Activated CD4-positive, alpha-beta T cell treated with anti-CD3 and anti-CD28 coated beads for 36 hours (primary cell): ENCODE measurements at regions of chr18 and their contacts with region 1.

Region 1: GRCh38 chr18:43571078-43571689 is 293.9 kb upstream of the SYT4 start:
- DNase-seq: peak; percentile 29
- ATAC-seq: no peak
- H3K4me3 Mint-ChIP-seq: no peak overlapping the region
- H3K27ac Mint-ChIP-seq: no peak overlapping the region
- H3K4me1 Mint-ChIP-seq: no peaks in the 10 kb centered on the region
- H3K27me3 Mint-ChIP-seq: no peaks in the 10 kb centered on the region

Region 2: GRCh38 chr18:43596105-43596712 is 25.0 kb after region 1 on chr18:
- CTCF ChIA-PET with region 1: interaction called, 10 read pairs
- POLR2A ChIA-PET with region 1: no interaction called
- intact Hi-C with region 1: no loop called
- DNase-seq: no peak
- ATAC-seq: peak; percentile 49
- H3K4me3 Mint-ChIP-seq: no peak overlapping the region
- H3K27ac Mint-ChIP-seq: no peak overlapping the region
- H3K4me1 Mint-ChIP-seq: no peaks in the 10 kb centered on the region
- H3K27me3 Mint-ChIP-seq: peaks cover 2% of the 10 kb centered on the region

Region 3: DNA sequence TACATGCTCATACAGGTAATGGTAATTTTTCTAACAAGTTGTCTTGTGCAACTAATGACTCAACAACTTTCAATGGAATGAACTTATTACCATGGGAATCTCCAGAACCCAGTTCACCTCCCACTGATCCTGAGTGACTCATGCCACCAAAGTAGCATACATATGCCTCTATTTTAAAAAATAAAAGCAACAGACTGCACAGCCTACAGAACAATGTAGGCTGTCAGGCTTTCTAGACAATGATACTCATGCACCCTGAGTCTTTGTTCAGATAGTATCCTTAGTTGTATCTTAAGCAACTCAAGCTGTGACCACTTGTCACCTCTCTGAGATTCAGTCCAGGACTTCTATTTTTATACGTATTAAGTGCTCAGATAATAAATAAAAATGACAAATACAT is 578.5 kb after region 1 on chr18:
- CTCF ChIA-PET with region 1: no interaction called
- POLR2A ChIA-PET with region 1: no interaction called
- intact Hi-C with region 1: no loop called
- DNase-seq: no peak
- ATAC-seq: no peak
- H3K4me3 Mint-ChIP-seq: no peak overlapping the region
- H3K27ac Mint-ChIP-seq: no peak overlapping the region
- H3K4me1 Mint-ChIP-seq: no peaks in the 10 kb centered on the region
- H3K27me3 Mint-ChIP-seq: no peaks in the 10 kb centered on the region